HEK293T (cell line): ENCODE measurements at regions of chr11 and their contacts with region 1.

Region 1: DNA sequence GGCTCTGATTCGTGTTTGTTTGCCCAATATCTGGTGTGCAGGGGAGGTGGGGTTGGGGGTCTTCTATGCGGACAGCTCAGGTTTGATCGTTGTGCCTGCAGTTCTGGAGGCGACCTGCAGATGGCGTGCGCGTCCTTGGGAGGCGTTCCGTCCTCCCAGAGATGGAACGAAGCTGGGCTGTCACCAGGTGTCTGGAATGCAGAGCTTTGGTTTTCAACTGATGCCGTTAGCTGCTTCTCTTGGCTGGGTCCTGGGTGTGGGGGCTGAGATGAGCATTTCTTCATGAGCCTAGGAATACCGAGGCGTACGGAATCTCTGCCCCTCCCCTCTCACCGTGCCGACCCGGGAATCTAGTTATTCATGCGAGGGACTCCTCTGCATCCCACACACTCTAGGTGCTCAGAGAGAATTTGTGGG is 98.6 kb downstream of the CEP164 start:
- DNase-seq: peak; percentile 88

Region 2: GRCh38 chr11:117443266-117444195 is 17.3 kb after region 1 on chr11:
- CTCF ChIA-PET with region 1: interaction called, 11 read pairs
- POLR2A ChIA-PET with region 1: no interaction called
- DNase-seq: peak; percentile 72

Region 3: GRCh38 chr11:117759305-117759704 is 333.0 kb after region 1 on chr11:
- CTCF ChIA-PET with region 1: interaction called, 14 read pairs
- POLR2A ChIA-PET with region 1: no interaction called
- DNase-seq: no peak

Region 4: GRCh38 chr11:117807482-117808327 is 381.4 kb after region 1 on chr11:
- CTCF ChIA-PET with region 1: interaction called, 35 read pairs
- POLR2A ChIA-PET with region 1: no interaction called
- DNase-seq: peak; percentile 76

Region 5: DNA sequence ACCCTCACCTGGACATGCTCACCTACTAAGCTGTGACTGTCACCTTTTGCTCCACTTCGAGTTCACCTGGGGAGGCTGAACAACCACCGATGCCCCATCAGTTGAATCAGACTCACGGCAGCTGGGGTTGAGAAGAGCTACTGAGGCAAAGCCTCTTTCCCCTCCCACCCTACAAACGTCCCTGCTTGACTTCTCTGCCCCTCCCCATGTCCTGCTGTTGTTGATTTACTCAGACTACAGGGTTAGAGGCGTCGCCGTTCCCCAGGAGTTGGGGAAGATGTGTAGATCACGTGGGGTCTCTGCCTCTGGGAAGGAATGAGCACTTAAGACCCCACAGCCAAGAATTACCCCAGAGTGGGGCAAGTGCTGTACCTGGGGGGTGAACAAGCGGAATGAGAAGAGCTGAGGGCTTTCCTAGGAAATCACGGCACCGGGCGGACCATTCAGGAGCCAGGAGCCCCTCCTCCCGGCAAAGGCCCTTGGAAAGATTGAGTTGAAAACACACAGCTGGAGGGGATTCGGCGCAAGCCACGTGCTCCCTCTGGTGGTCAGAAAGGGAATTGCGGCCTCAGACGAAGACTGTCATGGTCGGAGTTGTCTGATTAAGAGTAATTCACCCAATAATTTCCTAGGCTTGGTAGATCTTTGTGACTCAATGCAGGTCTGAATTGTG is 391.2 kb after region 1 on chr11:
- CTCF ChIA-PET with region 1: interaction called, 28 read pairs
- POLR2A ChIA-PET with region 1: no interaction called
- DNase-seq: peak; percentile 80